ENCODE measurements at regions of chr7 and their contacts with region 1.

Region 1: DNA sequence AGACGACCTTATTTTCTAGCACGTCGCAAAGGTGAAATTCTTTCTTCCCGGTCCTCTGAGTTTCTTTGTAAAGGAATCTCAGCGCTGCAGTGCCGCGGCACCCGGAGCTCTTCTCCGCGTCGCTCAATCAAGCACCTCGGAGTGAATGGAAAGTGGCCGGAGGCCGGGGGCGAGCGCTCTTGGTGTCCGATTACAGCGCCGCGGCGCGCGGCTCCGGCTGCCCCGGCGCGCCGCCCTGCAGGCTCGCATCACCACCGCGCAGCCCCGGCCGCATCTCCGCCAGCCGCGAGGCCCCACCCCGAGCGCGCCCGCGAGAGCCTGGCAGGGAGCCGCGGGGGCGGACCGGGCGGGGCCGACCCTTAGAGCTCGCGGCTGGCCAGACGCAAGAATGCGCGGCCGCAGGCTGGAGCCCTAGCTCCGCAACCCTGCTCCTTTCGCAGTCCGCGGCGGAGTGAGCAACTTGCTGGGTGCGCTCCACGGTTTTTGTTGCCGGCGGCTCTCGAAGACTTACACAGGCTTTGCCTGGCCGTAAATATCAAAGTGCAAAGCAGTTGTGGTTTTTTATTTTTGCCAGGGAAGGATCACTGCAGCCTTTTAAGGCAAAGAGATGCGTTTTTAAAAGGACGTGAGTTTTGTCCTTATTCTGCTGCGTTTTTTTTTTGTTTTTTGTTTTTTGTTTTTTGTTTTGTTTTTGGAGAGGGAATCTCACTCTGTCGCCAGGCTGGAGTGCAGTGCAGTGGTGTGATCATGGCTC is at the start of gene SEMA3C:
- DNase-seq: no peak
- H3K4me3 ChIP-seq: peak within 1 kb of the TSS; percentile 73
- CTCF ChIP-seq: peak; percentile 8

Region 2: GRCh38 chr7:80699045-80699638 is 219.9 kb before region 1 on chr7:
- CTCF ChIA-PET with region 1: interaction called, 15 read pairs
- POLR2A ChIA-PET with region 1: interaction called, 6 read pairs
- DNase-seq: no peak
- H3K4me3 ChIP-seq: no peak overlapping the region
- CTCF ChIP-seq: peak; percentile 27

Region 3: GRCh38 chr7:80907141-80907601 is 11.9 kb before region 1 on chr7:
- CTCF ChIA-PET with region 1: interaction called, 10 read pairs
- POLR2A ChIA-PET with region 1: interaction called, 4 read pairs
- DNase-seq: no peak
- H3K4me3 ChIP-seq: no peak overlapping the region
- CTCF ChIP-seq: no peak

Region 4: GRCh38 chr7:80941208-80941758 is 22.2 kb after region 1 on chr7:
- CTCF ChIA-PET with region 1: interaction called, 6 read pairs
- POLR2A ChIA-PET with region 1: interaction called, 11 read pairs
- DNase-seq: peak; percentile 40
- H3K4me3 ChIP-seq: no peak overlapping the region
- CTCF ChIP-seq: no peak

Region 5: GRCh38 chr7:81447351-81447952 is 528.4 kb after region 1 on chr7:
- CTCF ChIA-PET with region 1: interaction called, 14 read pairs
- POLR2A ChIA-PET with region 1: no interaction called
- DNase-seq: peak; percentile 14
- H3K4me3 ChIP-seq: no peak overlapping the region
- CTCF ChIP-seq: peak; percentile 57

Region 6: GRCh38 chr7:81457852-81458522 is 538.9 kb after region 1 on chr7:
- CTCF ChIA-PET with region 1: interaction called, 29 read pairs
- POLR2A ChIA-PET with region 1: interaction called, 3 read pairs
- DNase-seq: no peak
- H3K4me3 ChIP-seq: no peak overlapping the region
- CTCF ChIP-seq: peak; percentile 27